Endothelial cell of umbilical vein (primary cell): ENCODE measurements at regions of chr1 and their contacts with region 1.

Region 1: DNA sequence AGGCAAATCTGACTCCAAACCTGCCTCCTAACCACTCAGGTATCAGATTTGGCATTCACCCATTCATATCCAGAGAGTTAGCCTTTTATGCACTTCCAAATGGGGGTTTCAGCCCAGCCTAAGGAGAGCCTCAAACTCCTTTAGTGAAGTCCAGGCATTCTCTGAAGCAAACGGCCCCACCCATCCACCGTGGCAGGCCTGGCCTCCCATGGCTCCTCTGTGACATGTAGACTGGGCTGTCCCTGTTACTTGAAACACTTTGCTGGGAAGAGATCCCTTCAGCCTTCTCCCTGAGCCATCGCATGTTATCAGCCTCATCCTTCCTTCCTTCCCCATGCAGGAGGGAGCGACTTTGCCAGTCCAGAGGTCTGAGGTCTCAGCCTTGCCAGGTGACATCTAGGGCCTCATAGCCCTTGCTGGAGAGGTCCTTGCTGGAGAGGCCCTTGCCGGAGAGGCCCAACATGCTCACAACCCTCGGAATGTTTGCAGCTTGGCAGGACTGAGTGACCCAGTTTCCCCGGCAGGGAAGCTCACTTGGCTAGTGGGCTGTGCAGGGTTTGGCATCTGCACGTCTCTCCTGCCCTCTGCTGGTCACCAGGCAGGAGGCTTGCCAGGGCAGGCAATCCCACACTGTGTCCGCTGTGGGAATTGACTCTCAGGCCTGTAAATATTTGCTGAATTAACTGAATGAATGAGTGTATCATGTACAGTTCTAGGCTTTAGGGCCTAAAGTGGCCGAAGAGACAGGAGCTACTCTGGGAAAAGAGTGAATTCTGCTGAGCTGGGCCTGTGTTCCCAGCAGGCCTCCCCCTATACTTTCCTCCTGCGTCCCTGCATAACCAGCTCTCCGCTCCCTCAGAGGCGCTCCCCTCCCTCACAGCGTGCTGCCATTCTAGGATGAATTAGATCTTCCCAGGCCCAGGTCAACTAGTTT is 26.7 kb upstream of the RBM15 start:
- DNase-seq: peak; percentile 70
- H3K4me3 ChIP-seq: no peak overlapping the region
- H3K27ac ChIP-seq: no peak overlapping the region
- H3K4me1 ChIP-seq: no peaks in the 10 kb centered on the region
- H3K27me3 ChIP-seq: no peaks in the 10 kb centered on the region
- CTCF ChIP-seq: peak; percentile 88 to 96
- POLR2A ChIP-seq: no peak

Region 2: GRCh38 chr1:110196917-110197765 is 115.3 kb before region 1 on chr1:
- CTCF ChIA-PET with region 1: interaction called, 1,577 read pairs
- POLR2A ChIA-PET with region 1: no interaction called
- dilution Hi-C with region 1: no loop called
- intact Hi-C with region 1: no loop called
- DNase-seq: peak; percentile 34
- H3K4me3 ChIP-seq: no peak overlapping the region
- H3K27ac ChIP-seq: no peak overlapping the region
- H3K4me1 ChIP-seq: no peaks in the 10 kb centered on the region
- H3K27me3 ChIP-seq: no peaks in the 10 kb centered on the region
- CTCF ChIP-seq: peak; percentile 75 to 92
- POLR2A ChIP-seq: no peak

Region 3: GRCh38 chr1:110203021-110203661 is 109.3 kb before region 1 on chr1:
- CTCF ChIA-PET with region 1: interaction called, 1,577 read pairs
- POLR2A ChIA-PET with region 1: interaction called, 9 read pairs
- dilution Hi-C with region 1: no loop called
- intact Hi-C with region 1: loop called (anchors 1 kb)
- DNase-seq: peak; percentile 72
- H3K4me3 ChIP-seq: no peak overlapping the region
- H3K27ac ChIP-seq: no peak overlapping the region
- H3K4me1 ChIP-seq: peaks cover 4% of the 10 kb centered on the region
- H3K27me3 ChIP-seq: no peaks in the 10 kb centered on the region
- CTCF ChIP-seq: peak; percentile 67 to 76
- POLR2A ChIP-seq: no peak

Region 4: GRCh38 chr1:110235834-110236682 is 76.4 kb before region 1 on chr1:
- CTCF ChIA-PET with region 1: interaction called, 20 read pairs
- POLR2A ChIA-PET with region 1: no interaction called
- dilution Hi-C with region 1: no loop called
- intact Hi-C with region 1: no loop called
- DNase-seq: peak; percentile 86
- H3K4me3 ChIP-seq: no peak overlapping the region
- H3K27ac ChIP-seq: peak overlapping the region; percentile 77
- H3K4me1 ChIP-seq: peaks cover 36% of the 10 kb centered on the region
- H3K27me3 ChIP-seq: no peaks in the 10 kb centered on the region
- CTCF ChIP-seq: no peak
- POLR2A ChIP-seq: no peak

Region 5: GRCh38 chr1:110243574-110243973 is 68.9 kb before region 1 on chr1:
- CTCF ChIA-PET with region 1: interaction called, 13 read pairs
- POLR2A ChIA-PET with region 1: no interaction called
- dilution Hi-C with region 1: no loop called
- intact Hi-C with region 1: no loop called
- DNase-seq: no peak
- H3K4me3 ChIP-seq: no peak overlapping the region
- H3K27ac ChIP-seq: no peak overlapping the region
- H3K4me1 ChIP-seq: peaks cover 19% of the 10 kb centered on the region
- H3K27me3 ChIP-seq: no peaks in the 10 kb centered on the region
- CTCF ChIP-seq: no peak
- POLR2A ChIP-seq: no peak

Region 6: GRCh38 chr1:110292031-110292741 is 20.3 kb before region 1 on chr1:
- CTCF ChIA-PET with region 1: interaction called, 10 read pairs
- POLR2A ChIA-PET with region 1: no interaction called
- dilution Hi-C with region 1: no loop called
- intact Hi-C with region 1: no loop called
- DNase-seq: peak; percentile 12
- H3K4me3 ChIP-seq: no peak overlapping the region
- H3K27ac ChIP-seq: no peak overlapping the region
- H3K4me1 ChIP-seq: no peaks in the 10 kb centered on the region
- H3K27me3 ChIP-seq: peaks cover 5 to 9% of the 10 kb centered on the region in 2 experiments
- CTCF ChIP-seq: no peak
- POLR2A ChIP-seq: no peak

Region 7: DNA sequence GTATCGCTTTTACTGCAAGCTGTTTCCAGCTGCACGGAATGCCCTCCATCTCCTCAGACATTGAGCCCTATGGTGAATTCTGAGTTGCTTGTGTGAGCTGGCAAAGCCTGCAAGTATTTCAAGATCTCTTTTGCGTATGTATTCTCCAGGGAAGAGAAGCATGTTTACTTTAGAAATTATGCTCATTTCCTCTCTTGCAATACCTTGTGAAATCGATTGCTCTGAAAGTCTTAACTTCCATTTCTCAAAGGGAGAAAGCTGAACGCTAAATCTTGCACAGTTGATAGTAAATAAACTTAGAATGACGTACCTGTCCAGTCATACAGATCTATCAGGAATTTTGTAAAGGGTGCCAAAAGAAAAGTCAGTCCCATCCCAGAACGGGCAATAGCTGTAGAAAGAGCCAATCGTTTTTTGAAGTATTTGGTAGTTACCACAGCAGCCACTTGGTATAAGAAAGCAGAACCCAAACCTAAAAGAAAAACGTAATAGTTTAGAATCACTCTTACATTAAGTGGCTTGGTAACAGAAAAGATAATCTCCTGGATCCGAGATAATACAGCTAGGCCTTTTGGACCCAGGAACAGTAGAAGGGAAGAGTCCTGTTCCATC is 68.3 kb after region 1 on chr1:
- CTCF ChIA-PET with region 1: no interaction called
- POLR2A ChIA-PET with region 1: no interaction called
- dilution Hi-C with region 1: no loop called
- intact Hi-C with region 1: no loop called
- DNase-seq: no peak
- H3K4me3 ChIP-seq: no peak overlapping the region
- H3K27ac ChIP-seq: no peak overlapping the region
- H3K4me1 ChIP-seq: peaks cover 7% of the 10 kb centered on the region
- H3K27me3 ChIP-seq: no peaks in the 10 kb centered on the region
- CTCF ChIP-seq: no peak
- POLR2A ChIP-seq: no peak